Activated CD4-positive, alpha-beta memory T cell treated with anti-CD3 and anti-CD28 coated beads for 36 hours (primary cell): ENCODE measurements at regions of chr1 and their contacts with region 1.

Region 1: DNA sequence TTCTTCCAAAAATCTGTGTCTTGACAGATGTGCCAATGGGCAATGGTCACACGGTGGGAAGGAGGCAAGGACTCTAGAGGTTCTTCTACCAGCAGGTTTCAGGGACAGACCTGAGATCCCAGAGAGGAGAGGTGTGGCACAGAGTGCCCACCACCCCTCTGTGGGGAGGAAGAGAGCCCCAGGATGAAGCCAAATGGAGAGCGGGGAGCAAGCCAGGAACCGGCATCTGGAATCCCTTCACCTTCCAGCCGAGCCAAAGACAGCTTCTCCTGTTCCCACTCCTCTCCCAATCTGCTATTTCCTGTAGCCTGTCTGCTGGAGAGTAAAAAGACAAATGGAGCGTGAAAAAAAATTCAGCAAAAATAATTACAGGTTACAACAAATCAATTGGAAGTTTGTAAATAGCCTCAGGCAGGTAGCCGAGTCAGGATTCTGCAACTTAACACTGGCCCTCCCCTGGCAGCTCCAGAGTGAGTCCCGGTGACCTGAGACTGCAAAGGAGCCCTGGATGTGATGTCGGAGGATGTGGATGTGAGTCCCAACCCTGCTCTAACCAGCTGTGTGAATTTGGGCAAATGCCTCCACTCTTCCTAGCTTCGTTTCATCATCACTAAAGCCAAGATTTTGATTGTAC is 45.4 kb upstream of the LRRN2 start:
- DNase-seq: no peak
- H3K4me3 Mint-ChIP-seq: no peak overlapping the region
- H3K27ac Mint-ChIP-seq: no peak overlapping the region
- H3K4me1 Mint-ChIP-seq: no peaks in the 10 kb centered on the region
- H3K27me3 Mint-ChIP-seq: peaks cover 5% of the 10 kb centered on the region

Region 2: GRCh38 chr1:204746838-204747442 is 16.0 kb after region 1 on chr1:
- CTCF ChIA-PET with region 1: interaction called, 17 read pairs
- POLR2A ChIA-PET with region 1: no interaction called
- intact Hi-C with region 1: no loop called
- DNase-seq: peak; percentile 62
- H3K4me3 Mint-ChIP-seq: no peak overlapping the region
- H3K27ac Mint-ChIP-seq: no peak overlapping the region
- H3K4me1 Mint-ChIP-seq: no peaks in the 10 kb centered on the region
- H3K27me3 Mint-ChIP-seq: peaks cover 23% of the 10 kb centered on the region